ENCODE measurements at regions of chr17 and their contacts with region 1.

Region 1: GRCh38 chr17:57671667-57672632 is 73.1 kb downstream of the CCDC182 start:
- DNase-seq: peak; percentile 70
- H3K4me3 ChIP-seq: no peak overlapping the region
- H3K27ac ChIP-seq: peak overlapping the region; percentile 2 to 14
- H3K4me1 ChIP-seq: no peaks in the 10 kb centered on the region
- H3K27me3 ChIP-seq: no peaks in the 10 kb centered on the region
- CTCF ChIP-seq: peak; percentile 87 to 92 (median 89)
- POLR2A ChIP-seq: no peak

Region 2: GRCh38 chr17:57130761-57131461 is 541.0 kb before region 1 on chr17:
- intact Hi-C with region 1: loop called (anchors 2 kb)
- DNase-seq: peak; percentile 87
- H3K4me3 ChIP-seq: peak overlapping the region in 1 of 2 donors; percentile 12
- H3K27ac ChIP-seq: no peak overlapping the region
- H3K4me1 ChIP-seq: no peaks in the 10 kb centered on the region
- H3K27me3 ChIP-seq: no peaks in the 10 kb centered on the region
- CTCF ChIP-seq: peak; percentile 76 to 97 (median 78)
- POLR2A ChIP-seq: no peak

Region 3: GRCh38 chr17:57243171-57243948 is 428.6 kb before region 1 on chr17:
- intact Hi-C with region 1: loop called (anchors 5 kb)
- DNase-seq: peak; percentile 61
- H3K4me3 ChIP-seq: no peak overlapping the region
- H3K27ac ChIP-seq: no peak overlapping the region
- H3K4me1 ChIP-seq: no peaks in the 10 kb centered on the region
- H3K27me3 ChIP-seq: no peaks in the 10 kb centered on the region
- CTCF ChIP-seq: peak; percentile 95 to 99 (median 98)
- POLR2A ChIP-seq: no peak

Region 4: GRCh38 chr17:57597531-57598453 is 74.2 kb before region 1 on chr17:
- intact Hi-C with region 1: loop called (anchors 2 kb)
- DNase-seq: peak; percentile 57
- H3K4me3 ChIP-seq: no peak overlapping the region
- H3K27ac ChIP-seq: no peak overlapping the region
- H3K4me1 ChIP-seq: no peaks in the 10 kb centered on the region
- H3K27me3 ChIP-seq: no peaks in the 10 kb centered on the region
- CTCF ChIP-seq: peak; percentile 60 to 82 (median 74)
- POLR2A ChIP-seq: no peak